Natural killer cell (primary cell): ENCODE measurements at regions of chr5 and their contacts with region 1.

Region 1: DNA sequence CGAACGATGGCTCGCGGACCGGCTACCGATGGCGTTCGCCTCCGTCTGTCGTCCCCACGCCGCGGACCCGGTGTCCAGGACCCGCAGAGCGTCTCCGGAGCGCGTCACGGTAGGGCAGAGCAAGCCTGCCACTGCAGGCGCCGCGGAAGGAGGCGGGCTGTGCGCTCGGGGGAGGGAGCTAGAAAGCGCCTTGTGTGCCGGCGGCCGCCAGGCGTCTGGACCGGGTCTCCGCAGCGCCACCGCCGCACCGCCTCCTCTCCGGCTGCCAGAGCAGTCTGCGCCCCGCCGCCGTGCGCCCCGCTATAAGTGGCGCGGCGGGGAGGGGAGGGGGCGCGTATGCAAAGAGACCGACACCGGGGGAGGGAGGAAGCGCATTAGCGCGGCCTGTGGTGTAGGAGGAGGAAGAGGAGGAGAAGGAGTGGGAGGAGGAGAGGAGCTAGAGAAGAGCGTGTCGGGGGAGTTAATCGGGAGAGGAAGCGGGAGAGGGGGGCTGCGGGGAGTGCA is at the start of gene ENC1:
- DNase-seq: peak; percentile 80 to 87
- ATAC-seq: peak; percentile 81 to 90 (median 87)
- H3K4me3 ChIP-seq: peak within 1 kb of the TSS; percentile 80
- H3K4me3 Mint-ChIP-seq: peak within 1 kb of the TSS; percentile 91
- H3K27ac ChIP-seq: peak within 1 kb of the TSS; percentile 66
- H3K27ac Mint-ChIP-seq: peak within 1 kb of the TSS; percentile 83 to 91
- H3K4me1 ChIP-seq: peaks cover 27% of the 10 kb centered on the region
- H3K4me1 Mint-ChIP-seq: peaks cover 49 to 55% of the 10 kb centered on the region in 2 donors
- H3K27me3 ChIP-seq: no peaks in the 10 kb centered on the region
- H3K27me3 Mint-ChIP-seq: no peaks in the 10 kb centered on the region
- CTCF ChIP-seq: peak; percentile 31
- total RNA-seq, gene ENC1: 89.6 to 133 (median 99.3) TPM

Region 2: DNA sequence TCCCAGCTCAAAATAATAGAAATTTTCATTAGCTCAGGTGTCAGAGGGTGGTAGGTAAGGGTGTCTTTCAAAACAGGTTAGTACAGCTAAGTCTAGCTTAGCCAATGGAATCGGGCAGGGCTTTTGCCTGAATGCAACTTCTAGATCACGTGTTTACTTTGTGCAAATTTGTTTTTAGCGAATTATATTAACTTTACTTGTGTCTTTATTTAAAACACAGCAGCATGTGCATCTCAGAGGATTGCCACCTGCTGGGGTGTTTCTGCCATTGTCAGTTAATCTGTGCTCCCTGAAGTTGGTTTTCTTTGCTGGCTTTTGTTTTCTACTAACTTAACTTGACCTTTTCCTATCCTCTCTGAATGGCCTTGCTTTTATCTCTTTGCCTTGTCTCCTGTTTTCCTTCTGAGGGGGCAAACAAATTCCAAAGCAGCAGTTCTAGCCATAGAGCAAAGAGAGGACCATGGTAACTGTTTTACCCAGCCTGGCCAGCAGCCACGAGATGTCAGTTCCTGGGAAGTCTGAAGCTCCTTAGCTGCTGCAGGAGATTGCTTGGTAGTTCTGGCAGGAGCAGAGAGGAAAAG is 946.9 kb before region 1 on chr5:
- intact Hi-C with region 1: loop called (anchors 10 kb)
- DNase-seq: peak in 1 of 2 donors; percentile 35
- ATAC-seq: peak in 2 of 3 donors; percentile 19 to 21
- H3K4me3 ChIP-seq: no peak overlapping the region
- H3K4me3 Mint-ChIP-seq: peak overlapping the region; percentile 80
- H3K27ac ChIP-seq: peak overlapping the region; percentile 79
- H3K27ac Mint-ChIP-seq: peak overlapping the region; percentile 81 to 88
- H3K4me1 ChIP-seq: peaks cover 32% of the 10 kb centered on the region
- H3K4me1 Mint-ChIP-seq: peaks cover 50 to 58% of the 10 kb centered on the region in 2 donors
- H3K27me3 ChIP-seq: no peaks in the 10 kb centered on the region
- H3K27me3 Mint-ChIP-seq: peaks cover 0 to 3% of the 10 kb centered on the region in 2 donors
- CTCF ChIP-seq: peak; percentile 37

Region 3: DNA sequence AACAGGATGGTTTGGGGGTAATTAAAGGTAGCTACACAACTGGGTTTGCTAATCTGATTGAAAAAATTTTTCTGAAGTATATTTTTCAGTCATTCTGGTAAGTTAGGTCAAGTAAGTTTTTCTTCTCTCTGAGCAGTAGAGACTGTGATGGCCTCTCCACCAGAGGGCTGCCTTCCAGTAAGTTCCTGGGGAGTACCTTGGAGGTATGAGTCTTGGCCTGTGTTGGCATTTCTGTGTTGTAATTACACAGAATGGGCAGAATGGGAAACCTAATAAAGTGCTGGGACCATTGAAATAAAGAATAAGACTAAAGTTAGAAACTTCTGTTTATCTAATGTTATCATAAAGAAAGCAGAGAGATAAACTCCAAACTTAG is 583.7 kb before region 1 on chr5:
- intact Hi-C with region 1: loop called (anchors 10 kb)
- DNase-seq: peak in 1 of 2 donors; percentile 9
- ATAC-seq: no peak
- H3K4me3 ChIP-seq: no peak overlapping the region
- H3K4me3 Mint-ChIP-seq: no peak overlapping the region
- H3K27ac ChIP-seq: no peak overlapping the region
- H3K27ac Mint-ChIP-seq: no peak overlapping the region
- H3K4me1 ChIP-seq: no peaks in the 10 kb centered on the region
- H3K4me1 Mint-ChIP-seq: peaks cover 0 to 13% of the 10 kb centered on the region in 2 donors
- H3K27me3 ChIP-seq: no peaks in the 10 kb centered on the region
- H3K27me3 Mint-ChIP-seq: peaks cover 0 to 5% of the 10 kb centered on the region in 2 donors
- CTCF ChIP-seq: no peak

Region 4: GRCh38 chr5:74326571-74327338 is 313.7 kb before region 1 on chr5:
- intact Hi-C with region 1: loop called (anchors 5 kb)
- DNase-seq: peak; percentile 44 to 83
- ATAC-seq: peak; percentile 86 to 98 (median 87)
- H3K4me3 ChIP-seq: no peak overlapping the region
- H3K4me3 Mint-ChIP-seq: peak overlapping the region; percentile 26
- H3K27ac ChIP-seq: no peak overlapping the region
- H3K27ac Mint-ChIP-seq: peak overlapping the region; percentile 65
- H3K4me1 ChIP-seq: peaks cover 15% of the 10 kb centered on the region
- H3K4me1 Mint-ChIP-seq: peaks cover 22 to 26% of the 10 kb centered on the region in 2 donors
- H3K27me3 ChIP-seq: peaks cover 12% of the 10 kb centered on the region
- H3K27me3 Mint-ChIP-seq: peaks cover 34 to 42% of the 10 kb centered on the region in 2 donors
- CTCF ChIP-seq: no peak

Region 5: GRCh38 chr5:75130818-75131349 is 490.4 kb after region 1 on chr5:
- intact Hi-C with region 1: no loop called
- DNase-seq: no peak
- ATAC-seq: no peak
- H3K4me3 ChIP-seq: no peak overlapping the region
- H3K4me3 Mint-ChIP-seq: no peak overlapping the region
- H3K27ac ChIP-seq: no peak overlapping the region
- H3K27ac Mint-ChIP-seq: no peak overlapping the region
- H3K4me1 ChIP-seq: no peaks in the 10 kb centered on the region
- H3K4me1 Mint-ChIP-seq: no peaks in the 10 kb centered on the region
- H3K27me3 ChIP-seq: no peaks in the 10 kb centered on the region
- H3K27me3 Mint-ChIP-seq: peaks cover 0 to 14% of the 10 kb centered on the region in 2 donors
- CTCF ChIP-seq: no peak